Calu3 (cell line): ENCODE measurements at regions of chr20 and their contacts with region 1.

Region 1: GRCh38 chr20:208942-209566 is 18.0 kb upstream of the DEFB129 start:
- DNase-seq: peak; percentile 1
- H3K4me3 Mint-ChIP-seq: no peak overlapping the region
- H3K27ac Mint-ChIP-seq: no peak overlapping the region
- H3K4me1 Mint-ChIP-seq: no peaks in the 10 kb centered on the region
- H3K27me3 Mint-ChIP-seq: peaks cover 43% of the 10 kb centered on the region
- CTCF ChIP-seq: no peak

Region 2: DNA sequence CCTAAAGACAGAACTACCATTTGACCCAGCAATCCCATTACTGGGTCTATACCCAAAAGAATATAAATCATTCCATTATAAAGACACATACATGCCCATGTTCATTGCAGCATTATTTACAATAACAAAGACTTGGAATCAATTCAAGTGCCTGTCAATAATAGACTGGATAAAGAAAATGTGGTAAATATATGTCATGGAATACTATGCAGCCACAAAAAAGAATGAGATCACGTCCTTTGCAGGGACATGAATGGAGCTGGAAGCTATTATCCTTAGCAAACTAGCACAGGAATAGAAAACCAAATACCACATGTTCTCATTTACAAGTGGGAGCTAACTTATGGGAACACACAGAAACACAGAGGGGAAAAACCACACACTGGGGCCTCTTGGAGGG is 10.8 kb before region 1 on chr20:
- CTCF ChIA-PET with region 1: no interaction called
- intact Hi-C with region 1: no loop called
- DNase-seq: no peak
- H3K4me3 Mint-ChIP-seq: no peak overlapping the region
- H3K27ac Mint-ChIP-seq: no peak overlapping the region
- H3K4me1 Mint-ChIP-seq: no peaks in the 10 kb centered on the region
- H3K27me3 Mint-ChIP-seq: peaks cover 51% of the 10 kb centered on the region
- CTCF ChIP-seq: no peak

Region 3: GRCh38 chr20:330233-331149 is 121.4 kb after region 1 on chr20:
- CTCF ChIA-PET with region 1: no interaction called
- intact Hi-C with region 1: loop called (anchors 5 kb)
- DNase-seq: peak; percentile 36
- H3K4me3 Mint-ChIP-seq: no peak overlapping the region
- H3K27ac Mint-ChIP-seq: no peak overlapping the region
- H3K4me1 Mint-ChIP-seq: peaks cover 13% of the 10 kb centered on the region
- H3K27me3 Mint-ChIP-seq: no peaks in the 10 kb centered on the region
- CTCF ChIP-seq: peak; percentile 53